HEK293 (cell line): ENCODE measurements at regions of chr4 and their contacts with region 1.

Region 1: GRCh38 chr4:99462875-99463464 is 27.8 kb upstream of the ADH7 start:
- H3K4me3 ChIP-seq: no peak overlapping the region
- H3K27ac ChIP-seq: no peak overlapping the region
- H3K4me1 ChIP-seq: no peaks in the 10 kb centered on the region
- CTCF ChIP-seq: peak; percentile 22; the same call in 1 of the 2 replicates

Region 2: DNA sequence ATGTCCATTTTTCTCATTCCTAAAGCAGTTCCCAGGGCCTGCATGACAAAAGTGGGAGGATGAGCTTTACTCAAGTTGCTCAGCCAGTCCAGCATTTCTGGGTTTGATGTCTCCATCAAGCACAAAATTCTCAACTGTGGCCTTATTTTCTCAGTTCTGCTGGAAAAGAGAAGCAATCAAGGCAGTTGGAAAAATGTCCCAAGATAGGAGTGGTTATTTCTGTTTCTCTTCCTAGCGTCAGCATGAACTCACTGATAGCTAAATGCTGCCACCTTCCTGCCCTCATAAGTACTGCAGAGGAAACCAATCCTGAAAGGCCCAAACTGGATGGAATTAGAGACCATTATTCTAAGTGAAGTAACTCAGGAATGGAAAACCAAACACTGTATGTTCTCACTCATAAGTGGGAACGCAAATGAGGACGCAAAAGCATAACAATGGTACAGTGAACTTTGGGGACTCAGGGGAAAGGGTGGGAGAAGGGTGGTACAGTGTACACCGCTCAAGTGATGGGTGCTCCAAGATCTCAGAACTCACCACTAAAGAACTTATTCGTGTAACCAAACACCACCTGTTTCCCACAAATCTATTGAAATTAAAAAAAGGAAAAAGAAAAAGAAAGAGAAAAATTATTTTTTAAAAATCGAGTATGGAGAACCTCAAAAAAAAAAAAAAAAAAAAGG is 57.4 kb before region 1 on chr4:
- CTCF ChIA-PET with region 1: interaction called, 15 read pairs
- POLR2A ChIA-PET with region 1: no interaction called
- H3K4me3 ChIP-seq: no peak overlapping the region
- H3K27ac ChIP-seq: no peak overlapping the region
- H3K4me1 ChIP-seq: no peaks in the 10 kb centered on the region
- CTCF ChIP-seq: peak; percentile 65

Region 3: GRCh38 chr4:99808260-99808857 is 345.4 kb after region 1 on chr4:
- CTCF ChIA-PET with region 1: interaction called, 15 read pairs
- POLR2A ChIA-PET with region 1: no interaction called
- H3K4me3 ChIP-seq: no peak overlapping the region
- H3K27ac ChIP-seq: no peak overlapping the region
- H3K4me1 ChIP-seq: no peaks in the 10 kb centered on the region
- CTCF ChIP-seq: peak; percentile 57; the same call in 1 of the 2 replicates